ENCODE measurements at regions of chr6 and their contacts with region 1.

Region 1: GRCh38 chr6:75643173-75643572 is 41.5 kb downstream of the SENP6 start:
- DNase-seq: no peak
- ATAC-seq: no peak
- H3K4me3 Mint-ChIP-seq: no peak overlapping the region
- H3K27ac Mint-ChIP-seq: no peak overlapping the region
- H3K4me1 Mint-ChIP-seq: no peaks in the 10 kb centered on the region
- H3K27me3 Mint-ChIP-seq: no peaks in the 10 kb centered on the region
- CTCF ChIP-seq: no peak

Region 2: DNA sequence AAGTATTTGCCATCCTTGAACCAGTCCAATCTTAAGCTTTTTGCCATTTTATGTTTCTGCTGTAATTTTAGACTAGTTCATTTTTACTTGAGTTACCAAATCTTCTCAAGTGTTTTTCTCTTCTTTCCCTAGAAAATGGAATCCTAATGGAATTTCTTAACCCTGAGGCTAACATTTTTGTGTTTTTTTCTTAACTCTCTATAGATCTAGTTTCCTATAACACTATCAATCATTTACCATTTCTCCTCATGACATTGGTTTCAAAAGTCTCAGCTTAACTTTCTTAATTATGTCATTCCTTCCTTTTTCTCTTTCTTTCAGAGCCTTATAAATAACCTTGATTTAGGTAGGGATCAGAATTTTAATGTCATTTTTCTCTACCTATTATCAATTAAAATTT is 13.3 kb after region 1 on chr6:
- CTCF ChIA-PET with region 1: no interaction called
- POLR2A ChIA-PET with region 1: no interaction called
- intact Hi-C with region 1: loop called (anchors 2 kb)
- DNase-seq: no peak
- ATAC-seq: no peak
- H3K4me3 Mint-ChIP-seq: no peak overlapping the region
- H3K27ac Mint-ChIP-seq: peak overlapping the region; percentile 6
- H3K4me1 Mint-ChIP-seq: no peaks in the 10 kb centered on the region
- H3K27me3 Mint-ChIP-seq: no peaks in the 10 kb centered on the region
- CTCF ChIP-seq: no peak

Region 3: GRCh38 chr6:75855052-75855451 is 211.9 kb after region 1 on chr6:
- CTCF ChIA-PET with region 1: no interaction called
- POLR2A ChIA-PET with region 1: no interaction called
- intact Hi-C with region 1: no loop called
- DNase-seq: no peak
- ATAC-seq: no peak
- H3K4me3 Mint-ChIP-seq: no peak overlapping the region
- H3K27ac Mint-ChIP-seq: no peak overlapping the region
- H3K4me1 Mint-ChIP-seq: no peaks in the 10 kb centered on the region
- H3K27me3 Mint-ChIP-seq: no peaks in the 10 kb centered on the region
- CTCF ChIP-seq: no peak

Measured in activated B cell treated with CpG ODN at 0.5 μM for 24 hours (primary cell).